Ascending aorta (tissue), 2 donors: ENCODE measurements at regions of chr10 and their contacts with region 1.

Region 1: DNA sequence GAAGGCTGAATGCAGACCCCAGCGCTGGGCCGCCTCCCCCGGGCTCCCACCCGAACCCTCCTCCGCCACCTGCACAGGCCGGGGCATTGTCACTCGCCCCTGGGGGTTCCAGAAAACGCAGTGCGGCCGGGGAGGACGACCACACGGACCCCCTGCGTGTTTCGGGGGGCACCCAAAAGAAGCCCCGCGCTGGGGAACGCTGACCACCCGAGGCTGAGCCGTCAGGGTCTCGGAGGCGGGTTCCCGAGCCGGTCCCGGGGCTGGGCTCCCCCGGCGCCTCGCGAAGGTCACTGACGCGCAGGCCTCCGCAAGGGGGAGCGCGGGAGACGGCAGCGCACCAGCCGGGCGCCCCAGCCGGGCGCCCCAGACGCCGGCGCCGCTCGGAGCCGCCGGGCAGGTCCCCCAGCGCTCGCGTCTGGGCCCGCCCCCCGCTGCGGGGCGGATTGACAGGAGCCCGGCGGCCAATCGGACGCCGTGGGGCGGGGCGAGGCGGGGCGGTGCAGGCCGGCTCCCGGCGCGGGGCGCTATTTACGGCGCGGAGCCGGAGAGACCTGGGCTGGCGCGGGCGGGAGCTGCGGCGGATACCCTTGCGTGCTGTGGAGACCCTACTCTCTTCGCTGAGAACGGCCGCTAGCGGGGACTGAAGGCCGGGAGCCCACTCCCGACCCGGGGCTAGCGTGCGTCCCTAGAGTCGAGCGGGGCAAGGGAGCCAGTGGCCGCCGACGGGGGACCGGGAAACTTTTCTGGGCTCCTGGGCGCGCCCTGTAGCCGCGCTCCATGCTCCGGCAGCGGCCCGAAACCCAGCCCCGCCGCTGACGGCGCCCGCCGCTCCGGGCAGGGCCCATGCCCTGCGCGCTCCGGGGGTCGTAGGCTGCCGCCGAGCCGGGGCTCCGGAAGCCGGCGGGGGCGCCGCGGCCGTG is at the start of gene BAMBI:
- DNase-seq: peak; percentile 59 to 96
- H3K4me3 ChIP-seq: peak within 1 kb of the TSS; percentile 98 to 99
- H3K27ac ChIP-seq: peak within 1 kb of the TSS; percentile 85
- H3K4me1 ChIP-seq: peaks cover 6 to 11% of the 10 kb centered on the region in 2 donors
- H3K27me3 ChIP-seq: no peaks in the 10 kb centered on the region
- CTCF ChIP-seq: peak; percentile 61 to 85 (median 66)
- total RNA-seq, gene BAMBI: 16.3 TPM

Region 2: GRCh38 chr10:28663576-28664313 is 13.5 kb before region 1 on chr10:
- intact Hi-C with region 1: loop called (anchors 1 kb)
- DNase-seq: peak; percentile 21 to 87
- H3K4me3 ChIP-seq: no peak overlapping the region
- H3K27ac ChIP-seq: peak overlapping the region; percentile 47 to 62
- H3K4me1 ChIP-seq: peaks cover 0 to 5% of the 10 kb centered on the region in 2 donors
- H3K27me3 ChIP-seq: no peaks in the 10 kb centered on the region
- CTCF ChIP-seq: peak; percentile 88 to 98 (median 97)

Region 3: DNA sequence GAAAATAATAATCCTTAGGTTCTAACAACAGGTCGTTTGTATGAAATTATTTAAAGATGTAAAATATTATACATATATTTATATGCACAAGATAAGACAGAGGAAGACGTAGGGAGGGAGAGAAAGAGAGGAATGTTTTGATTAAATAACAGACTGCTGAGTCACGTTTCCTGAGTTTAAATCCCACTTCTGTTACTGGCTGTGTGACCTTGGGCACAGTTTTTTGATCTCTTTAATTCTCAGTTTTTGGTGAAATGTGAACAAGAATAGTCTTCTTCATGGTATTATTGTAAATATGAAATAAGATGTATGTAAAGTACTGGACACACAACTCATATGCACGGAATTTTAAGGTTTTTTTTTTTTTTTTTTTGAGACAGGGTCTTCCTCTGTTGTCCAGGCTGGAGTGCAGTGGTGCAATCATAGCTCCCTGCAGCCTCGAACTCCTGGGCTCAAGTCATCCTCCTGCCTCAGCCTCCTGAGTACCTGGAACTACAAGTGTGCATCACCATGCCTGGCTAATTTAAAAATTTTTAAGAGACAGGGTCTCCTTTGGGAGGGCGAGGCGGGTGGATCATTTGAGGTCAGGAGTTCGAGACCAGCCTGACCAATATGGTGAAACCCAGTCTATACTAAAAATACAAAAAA is 42.7 kb after region 1 on chr10:
- intact Hi-C with region 1: no loop called
- DNase-seq: no peak
- H3K4me3 ChIP-seq: no peak overlapping the region
- H3K27ac ChIP-seq: no peak overlapping the region
- H3K4me1 ChIP-seq: peaks cover 2 to 7% of the 10 kb centered on the region in 2 donors
- H3K27me3 ChIP-seq: no peaks in the 10 kb centered on the region
- CTCF ChIP-seq: no peak

Region 4: DNA sequence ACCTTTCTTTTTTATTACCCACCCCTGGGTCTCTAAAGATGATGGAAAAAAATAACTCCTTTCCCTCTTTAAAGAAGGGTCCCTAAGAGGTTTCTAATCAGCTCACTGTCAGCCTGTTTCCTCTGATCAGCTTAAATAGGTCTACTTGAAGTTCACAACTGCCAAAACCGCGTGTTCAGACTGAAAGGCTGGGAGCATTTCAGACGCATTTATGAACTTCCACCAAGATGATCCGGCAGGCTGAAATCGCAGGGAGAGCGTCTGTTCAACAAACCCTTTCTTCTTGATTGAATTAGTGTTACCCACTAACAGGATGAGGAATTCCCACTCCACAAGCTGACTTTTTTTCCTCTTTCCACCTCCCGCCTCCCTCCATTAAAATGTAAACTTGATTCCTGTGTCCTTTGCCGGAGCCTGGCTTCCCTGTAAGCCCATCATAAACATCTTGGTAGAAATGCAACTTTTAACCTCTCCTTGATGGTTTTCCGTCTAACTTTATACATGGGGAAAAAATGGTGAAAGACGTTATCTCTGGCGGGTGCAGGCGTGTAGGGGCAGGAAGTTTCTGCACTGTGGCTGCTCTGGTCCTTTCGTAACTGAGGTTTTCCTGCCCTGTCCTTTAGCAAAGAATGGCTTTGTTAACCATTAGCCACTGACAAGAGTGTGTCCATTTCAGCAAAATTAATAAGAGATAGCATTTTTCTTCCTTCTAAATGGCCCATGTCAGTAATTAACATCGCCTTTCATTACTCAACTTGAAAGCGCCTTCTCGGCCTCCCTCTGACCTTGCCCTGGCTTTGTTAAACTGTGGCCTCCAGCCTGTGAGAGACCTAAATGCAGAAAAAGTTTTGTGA is 130.8 kb after region 1 on chr10:
- intact Hi-C with region 1: loop called (anchors 5 kb)
- DNase-seq: no peak
- H3K4me3 ChIP-seq: peak overlapping the region; percentile 31 to 47
- H3K27ac ChIP-seq: peak overlapping the region; percentile 84 to 89
- H3K4me1 ChIP-seq: peaks cover 3 to 25% of the 10 kb centered on the region in 2 donors
- H3K27me3 ChIP-seq: no peaks in the 10 kb centered on the region
- CTCF ChIP-seq: no peak

Region 5: GRCh38 chr10:28910956-28911355 is 233.7 kb after region 1 on chr10:
- intact Hi-C with region 1: loop called (anchors 5 kb)
- DNase-seq: no peak
- H3K4me3 ChIP-seq: no peak overlapping the region
- H3K27ac ChIP-seq: peak overlapping the region; percentile 78 to 88
- H3K4me1 ChIP-seq: peaks cover 7 to 33% of the 10 kb centered on the region in 2 donors
- H3K27me3 ChIP-seq: no peaks in the 10 kb centered on the region
- CTCF ChIP-seq: no peak

Region 6: DNA sequence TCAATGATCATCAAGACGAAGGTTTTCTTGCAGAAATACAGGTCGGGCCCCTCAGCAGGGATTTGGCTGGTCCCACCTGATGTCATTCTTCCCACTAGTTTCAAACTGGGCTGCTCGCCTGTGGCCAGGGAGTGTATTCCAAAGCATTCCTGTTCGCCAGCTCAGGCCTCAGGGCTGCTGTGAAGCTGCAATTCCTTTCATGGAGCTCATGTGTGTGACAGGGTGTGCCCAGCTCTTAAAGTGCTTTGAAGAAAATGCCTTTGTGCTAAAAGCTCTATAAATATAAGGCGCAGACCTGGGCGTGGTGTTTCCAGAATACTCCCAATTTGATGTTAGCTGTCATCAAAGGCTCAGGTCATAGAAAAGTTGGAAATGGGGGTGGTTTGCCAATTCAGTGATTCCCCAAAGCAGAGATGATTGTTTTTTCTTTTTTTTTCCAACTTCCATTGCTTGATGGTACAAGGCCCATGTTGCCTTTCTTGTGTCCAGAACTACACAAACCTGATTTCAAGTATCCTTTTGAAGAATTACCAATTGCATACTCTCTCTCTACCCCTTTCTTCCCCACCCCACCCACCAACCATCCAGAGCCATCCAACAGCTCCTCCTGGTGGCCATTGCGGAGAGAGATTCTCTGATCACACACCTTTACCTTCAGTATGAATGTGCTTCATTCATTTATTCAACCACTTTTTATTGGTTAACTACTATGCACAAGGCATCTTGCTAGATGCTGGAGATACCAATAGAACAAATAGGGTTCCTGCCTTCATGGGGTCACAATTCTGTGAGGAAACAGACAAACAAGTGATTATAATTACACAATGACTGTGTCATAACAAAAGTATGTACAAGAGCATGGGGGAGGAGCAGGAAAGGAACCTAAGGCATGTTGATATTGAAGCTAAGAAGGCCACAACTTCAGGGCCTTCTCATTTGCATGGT is 314.4 kb after region 1 on chr10:
- intact Hi-C with region 1: loop called (anchors 1 kb)
- DNase-seq: peak; percentile 61 to 90
- H3K4me3 ChIP-seq: no peak overlapping the region
- H3K27ac ChIP-seq: peak overlapping the region; percentile 62 to 74
- H3K4me1 ChIP-seq: peaks cover 0 to 11% of the 10 kb centered on the region in 2 donors
- H3K27me3 ChIP-seq: no peaks in the 10 kb centered on the region
- CTCF ChIP-seq: peak; percentile 54 to 79 (median 76)

Region 7: DNA sequence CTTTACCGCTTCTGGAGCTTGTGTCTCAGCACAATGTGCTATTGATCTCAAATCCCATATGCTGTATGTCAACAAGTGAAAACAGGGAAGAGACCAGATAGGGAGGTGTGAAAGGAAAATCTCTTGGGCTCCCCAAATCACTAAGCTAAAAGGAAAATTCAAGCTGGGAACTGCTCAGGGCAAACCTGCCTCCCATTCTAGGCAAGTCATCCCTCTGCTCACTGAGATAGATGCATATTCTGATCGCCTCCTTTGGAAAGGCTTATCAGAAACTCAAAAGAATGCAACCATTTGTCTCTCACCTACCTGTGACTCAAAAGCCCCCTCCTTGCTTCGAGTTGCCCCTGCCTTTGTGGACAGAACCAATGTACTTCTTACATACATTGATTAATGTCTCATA is 450.5 kb after region 1 on chr10:
- intact Hi-C with region 1: loop called (anchors 2 kb)
- DNase-seq: no peak
- H3K4me3 ChIP-seq: no peak overlapping the region
- H3K27ac ChIP-seq: no peak overlapping the region
- H3K4me1 ChIP-seq: peaks cover 0 to 2% of the 10 kb centered on the region in 2 donors
- H3K27me3 ChIP-seq: no peaks in the 10 kb centered on the region
- CTCF ChIP-seq: no peak

Region 8: DNA sequence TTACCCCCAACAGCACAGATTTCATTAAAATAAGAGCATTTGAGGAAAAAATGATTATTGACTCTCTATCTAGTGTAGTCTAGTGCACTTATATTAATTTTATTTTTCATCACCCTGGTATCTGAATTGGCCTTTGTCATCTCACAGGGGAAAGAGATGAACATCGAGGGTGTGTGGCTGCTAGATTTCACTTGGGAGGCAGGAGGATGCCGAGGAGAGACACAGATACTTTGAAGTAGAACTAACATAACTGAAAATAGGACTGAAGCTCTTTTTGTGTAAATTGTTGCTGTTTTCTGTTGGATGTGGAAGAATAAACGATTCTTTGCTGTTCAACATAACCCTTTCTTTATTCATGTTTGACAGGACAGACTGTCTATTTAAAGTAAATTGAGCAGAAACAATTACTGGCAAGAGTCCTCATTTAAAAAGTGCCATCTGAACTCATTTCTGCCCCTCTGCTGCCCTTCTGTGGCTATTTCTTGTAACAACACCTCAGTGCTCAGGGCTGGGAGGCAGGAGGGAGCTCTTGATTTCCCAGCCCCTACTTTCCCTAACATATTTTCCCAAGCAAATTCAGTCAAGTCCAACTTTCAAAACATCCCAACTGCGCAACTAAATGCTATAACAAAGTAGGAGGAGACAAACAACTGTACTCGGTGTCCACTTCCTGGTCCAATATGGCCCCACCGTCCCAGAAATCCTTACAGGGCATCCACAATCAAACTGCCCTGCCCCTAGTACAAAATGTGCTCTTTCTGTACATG is 627.2 kb after region 1 on chr10:
- intact Hi-C with region 1: loop called (anchors 1 kb)
- DNase-seq: peak in 1 of 2 donors; percentile 81
- H3K4me3 ChIP-seq: no peak overlapping the region
- H3K27ac ChIP-seq: no peak overlapping the region
- H3K4me1 ChIP-seq: peaks cover 0 to 3% of the 10 kb centered on the region in 2 donors
- H3K27me3 ChIP-seq: no peaks in the 10 kb centered on the region
- CTCF ChIP-seq: peak; percentile 78 to 84 (median 80)